ENCODE measurements at regions of chrX and their contacts with region 1.

Region 1: GRCh38 chrX:46686003-46686645 is 72.8 kb downstream of the SLC9A7 start:
- DNase-seq: peak in 2 of 5 donors; percentile 11 to 18
- ATAC-seq: peak in 3 of 4 donors; percentile 44 to 79 (median 64)
- H3K4me3 ChIP-seq: no peak overlapping the region
- H3K27ac ChIP-seq: no peak overlapping the region
- H3K4me1 ChIP-seq: no peaks in the 10 kb centered on the region
- H3K27me3 ChIP-seq: no peaks in the 10 kb centered on the region
- CTCF ChIP-seq: peak; percentile 48 to 82 (median 70)
- POLR2A ChIP-seq: no peak

Region 2: DNA sequence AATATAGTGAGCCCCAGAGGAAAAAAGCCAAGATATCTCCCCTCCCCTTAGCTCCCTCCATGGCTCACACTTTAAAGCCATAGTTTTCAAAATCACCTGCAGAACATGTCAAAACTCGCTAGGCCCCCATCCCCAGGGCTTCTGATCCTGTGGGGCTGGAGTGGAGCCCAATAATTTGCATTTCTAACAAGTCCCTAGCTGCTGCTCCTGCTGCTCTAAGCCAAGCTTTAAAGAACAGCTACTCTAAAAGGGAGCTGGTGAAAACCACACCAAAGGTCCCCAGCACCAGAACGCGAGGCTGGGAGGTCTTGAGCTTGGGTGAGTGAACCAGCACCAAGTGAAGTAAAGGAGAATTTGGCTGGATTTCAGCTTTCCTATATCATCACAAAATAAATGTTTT is 378.0 kb before region 1 on chrX:
- intact Hi-C with region 1: no loop called
- DNase-seq: no peak
- ATAC-seq: no peak
- H3K4me3 ChIP-seq: no peak overlapping the region
- H3K27ac ChIP-seq: no peak overlapping the region
- H3K4me1 ChIP-seq: no peaks in the 10 kb centered on the region
- H3K27me3 ChIP-seq: peaks cover 0 to 15% (median 0%) of the 10 kb centered on the region in 9 donors
- CTCF ChIP-seq: no peak
- POLR2A ChIP-seq: no peak

Region 3: GRCh38 chrX:46545111-46546005 is 140.8 kb before region 1 on chrX and contains the start of gene ZNF674:
- intact Hi-C with region 1: loop called in 3 of 10 experiments (anchors 5 to 10 kb)
- DNase-seq: peak; percentile 91 to 97 (median 94)
- ATAC-seq: peak; percentile 92 to 98 (median 94)
- H3K4me3 ChIP-seq: peak within 1 kb of the TSS; percentile 37 to 92 (median 78)
- H3K27ac ChIP-seq: peak within 1 kb of the TSS in 11 of 12 donors; percentile 41 to 89 (median 83)
- H3K4me1 ChIP-seq: peaks cover 0 to 23% (median 8%) of the 10 kb centered on the region in 12 donors
- H3K27me3 ChIP-seq: peaks cover 0 to 5% (median 0%) of the 10 kb centered on the region in 9 donors
- CTCF ChIP-seq: peak in 11 of 12 donors; percentile 10 to 48 (median 26)
- POLR2A ChIP-seq: peak in 1 of 2 donors; percentile 60
- total RNA-seq, gene ZNF674: 0.81 to 5.6 (median 3.8) TPM

Region 4: GRCh38 chrX:46554942-46555341 is 131.2 kb before region 1 on chrX:
- intact Hi-C with region 1: loop called in 7 of 10 experiments (anchors 2 to 10 kb)
- DNase-seq: no peak
- ATAC-seq: no peak
- H3K4me3 ChIP-seq: no peak overlapping the region
- H3K27ac ChIP-seq: no peak overlapping the region
- H3K4me1 ChIP-seq: no peaks in the 10 kb centered on the region
- H3K27me3 ChIP-seq: no peaks in the 10 kb centered on the region
- CTCF ChIP-seq: peak in 11 of 12 donors; percentile 6 to 47 (median 34)
- POLR2A ChIP-seq: no peak

Region 5: DNA sequence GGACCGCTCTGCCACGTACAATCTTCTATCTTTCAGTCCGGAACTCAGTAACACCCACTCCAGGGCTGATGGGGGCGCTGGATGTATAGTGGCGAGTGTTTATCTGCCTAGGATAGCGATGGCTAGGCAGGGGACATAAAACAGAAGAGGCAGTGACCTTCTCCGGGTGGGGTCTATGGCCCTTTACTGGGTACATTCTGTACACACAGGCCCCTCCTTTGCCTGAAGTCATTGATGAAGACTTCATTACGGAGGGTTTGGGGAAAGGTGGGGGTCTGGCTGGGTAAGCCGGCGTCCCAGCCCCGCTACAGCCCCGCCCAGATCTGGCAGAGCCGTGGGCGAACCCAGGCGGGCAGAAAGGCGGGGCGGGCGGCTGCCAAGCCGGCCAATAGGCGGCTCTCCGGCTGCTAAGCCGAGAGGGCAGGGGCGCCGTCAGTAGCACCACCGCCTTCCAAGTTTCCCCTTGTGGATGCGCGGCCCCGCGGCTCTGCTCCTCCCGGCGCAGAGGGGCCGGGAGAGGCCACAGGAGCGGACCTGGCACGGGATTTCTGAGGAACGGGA is 112.7 kb before region 1 on chrX and contains the start of gene CHST7:
- intact Hi-C with region 1: loop called in 3 of 10 experiments (anchors 5 kb)
- DNase-seq: peak; percentile 68 to 87 (median 80)
- ATAC-seq: peak; percentile 74 to 85 (median 84)
- H3K4me3 ChIP-seq: peak within 1 kb of the TSS; percentile 33 to 89 (median 67)
- H3K27ac ChIP-seq: peak within 1 kb of the TSS; percentile 70 to 85 (median 81)
- H3K4me1 ChIP-seq: peaks cover 0 to 21% (median 7%) of the 10 kb centered on the region in 12 donors
- H3K27me3 ChIP-seq: no peaks in the 10 kb centered on the region
- CTCF ChIP-seq: peak in 9 of 12 donors; percentile 6 to 53 (median 24)
- POLR2A ChIP-seq: peak in 1 of 2 donors; percentile 79
- total RNA-seq, gene CHST7: 5.0 to 41.8 (median 15.0) TPM

Region 6: DNA sequence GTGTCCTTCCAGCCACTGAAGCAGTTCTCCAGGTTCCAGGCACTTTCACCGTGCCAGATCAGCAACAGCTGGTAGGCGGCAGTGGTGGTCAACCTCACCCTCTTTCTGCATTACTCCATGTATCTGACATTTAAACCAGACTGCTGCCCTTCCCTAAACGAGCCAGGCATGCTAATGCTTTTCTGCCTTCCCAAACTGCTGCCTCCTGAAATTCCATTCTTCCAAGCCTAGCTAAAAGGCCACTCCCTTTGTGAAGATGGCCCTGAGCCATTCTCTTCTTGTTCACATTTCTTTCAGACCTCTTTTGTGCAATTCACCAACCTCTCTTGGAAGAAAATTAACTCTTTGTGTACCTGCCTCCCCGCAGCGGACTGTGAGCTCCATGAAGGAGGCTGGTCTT is 38.9 kb before region 1 on chrX:
- intact Hi-C with region 1: loop called in 2 of 10 experiments (anchors 1 to 5 kb)
- DNase-seq: no peak
- ATAC-seq: no peak
- H3K4me3 ChIP-seq: no peak overlapping the region
- H3K27ac ChIP-seq: no peak overlapping the region
- H3K4me1 ChIP-seq: peaks cover 0 to 22% (median 10%) of the 10 kb centered on the region in 12 donors
- H3K27me3 ChIP-seq: peaks cover 0 to 13% (median 0%) of the 10 kb centered on the region in 9 donors
- CTCF ChIP-seq: no peak
- POLR2A ChIP-seq: no peak

Region 7: DNA sequence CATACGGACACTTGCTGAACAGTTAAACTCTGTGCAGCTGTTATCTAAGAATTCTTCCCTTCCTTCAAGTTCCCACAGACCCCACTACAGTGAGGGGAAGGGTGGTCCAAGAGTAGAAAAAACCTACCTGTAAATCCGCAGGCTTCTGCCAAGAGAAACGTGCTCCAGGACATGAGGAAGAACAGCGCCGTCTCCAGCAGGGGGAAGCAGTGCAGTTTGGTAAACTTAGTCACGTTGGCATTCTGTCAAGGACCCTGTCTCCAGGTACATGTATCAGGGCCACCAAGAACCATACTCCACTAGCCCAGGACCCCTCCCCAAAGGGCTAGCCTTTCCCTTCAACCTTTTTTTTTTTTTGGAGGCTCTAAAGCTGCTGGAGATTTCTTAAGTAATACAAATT is 32.6 kb before region 1 on chrX:
- intact Hi-C with region 1: loop called in 1 of 10 experiments (anchors 5 kb)
- DNase-seq: no peak
- ATAC-seq: no peak
- H3K4me3 ChIP-seq: no peak overlapping the region
- H3K27ac ChIP-seq: no peak overlapping the region
- H3K4me1 ChIP-seq: peaks cover 0 to 22% (median 10%) of the 10 kb centered on the region in 12 donors
- H3K27me3 ChIP-seq: peaks cover 0 to 4% (median 0%) of the 10 kb centered on the region in 9 donors
- CTCF ChIP-seq: peak in 3 of 12 donors; percentile 10 to 22 (median 12)
- POLR2A ChIP-seq: no peak